Right lobe of liver (tissue), 6 donors: ENCODE measurements at regions of chr4 and their contacts with region 1.

Region 1: GRCh38 chr4:47032415-47033106 is 1.2 kb downstream of the GABRB1 start:
- DNase-seq: peak; percentile 56 to 62 (median 62)
- ATAC-seq: peak; percentile 93 to 97 (median 96)
- H3K4me3 ChIP-seq: peak overlapping the region; percentile 30 to 48 (median 38)
- H3K27ac ChIP-seq: no peak overlapping the region
- H3K4me1 ChIP-seq: peaks cover 0 to 14% (median 1%) of the 10 kb centered on the region in 4 donors
- H3K27me3 ChIP-seq: peaks cover 0 to 4% of the 10 kb centered on the region in 2 donors
- CTCF ChIP-seq: peak; percentile 65 to 75 (median 73)
- POLR2A ChIP-seq: no peak

Region 2: DNA sequence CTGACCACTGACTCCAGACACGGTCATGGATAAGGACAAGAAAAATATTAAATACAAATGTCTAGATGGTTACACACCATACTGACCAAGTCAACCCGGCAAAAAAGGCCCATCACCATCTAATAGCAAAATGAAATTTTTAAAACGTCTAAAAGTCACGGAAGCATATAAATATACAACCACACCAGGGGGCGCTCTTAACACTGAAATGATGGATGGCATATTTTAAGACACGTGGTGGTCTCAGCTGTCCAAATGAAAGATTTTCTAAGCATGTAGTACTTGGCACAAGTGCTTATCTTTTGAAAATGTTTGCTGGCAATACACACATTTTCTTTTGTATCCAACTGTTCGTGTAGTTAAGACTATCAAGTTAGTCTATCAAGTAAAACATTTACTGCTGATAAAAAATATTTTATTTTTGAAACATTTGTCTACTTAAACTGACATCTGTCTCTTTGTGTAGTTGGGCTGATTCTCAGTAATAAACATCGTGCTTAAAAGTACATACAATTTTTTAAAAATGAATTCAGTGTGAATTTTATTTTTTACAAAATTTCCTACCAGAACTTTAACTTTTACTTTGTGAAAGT is 188.1 kb before region 1 on chr4:
- intact Hi-C with region 1: loop called in 1 of 2 experiments (anchors 10 kb)
- DNase-seq: peak in 1 of 3 donors; percentile 47
- ATAC-seq: peak in 3 of 4 donors; percentile 45 to 62 (median 52)
- H3K4me3 ChIP-seq: no peak overlapping the region
- H3K27ac ChIP-seq: no peak overlapping the region
- H3K4me1 ChIP-seq: no peaks in the 10 kb centered on the region
- H3K27me3 ChIP-seq: no peaks in the 10 kb centered on the region
- CTCF ChIP-seq: peak; percentile 61 to 69 (median 68)
- POLR2A ChIP-seq: no peak

Region 3: DNA sequence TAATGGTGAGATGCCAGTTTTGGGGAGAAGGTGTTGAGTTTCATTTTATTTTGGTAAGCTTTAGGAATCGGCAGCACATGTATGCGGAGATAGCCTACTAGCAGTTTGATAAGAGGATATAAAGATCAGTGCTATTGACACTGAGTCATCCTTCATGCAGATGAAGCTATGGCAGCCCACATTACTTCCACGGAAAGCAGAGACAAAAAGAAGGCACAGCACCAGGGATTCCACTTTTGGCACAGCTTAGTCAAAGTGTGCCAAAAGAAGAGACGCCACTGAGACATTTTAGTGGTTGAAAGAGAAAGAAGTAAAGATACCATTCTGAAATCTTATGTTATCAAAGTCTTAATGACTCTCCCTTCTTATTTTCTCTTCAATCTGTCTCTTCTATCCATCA is 102.6 kb after region 1 on chr4:
- intact Hi-C with region 1: no loop called
- DNase-seq: no peak
- ATAC-seq: no peak
- H3K4me3 ChIP-seq: no peak overlapping the region
- H3K27ac ChIP-seq: no peak overlapping the region
- H3K4me1 ChIP-seq: no peaks in the 10 kb centered on the region
- H3K27me3 ChIP-seq: no peaks in the 10 kb centered on the region
- CTCF ChIP-seq: no peak
- POLR2A ChIP-seq: no peak